ENCODE measurements at regions of chr3 and their contacts with region 1.

Region 1: GRCh38 chr3:138417559-138417982 is 16.8 kb upstream of the ESYT3 start:
- DNase-seq: peak; percentile 86 to 87
- H3K4me3 ChIP-seq: no peak overlapping the region
- H3K4me1 ChIP-seq: no peaks in the 10 kb centered on the region
- H3K27me3 ChIP-seq: no peaks in the 10 kb centered on the region

Region 2: DNA sequence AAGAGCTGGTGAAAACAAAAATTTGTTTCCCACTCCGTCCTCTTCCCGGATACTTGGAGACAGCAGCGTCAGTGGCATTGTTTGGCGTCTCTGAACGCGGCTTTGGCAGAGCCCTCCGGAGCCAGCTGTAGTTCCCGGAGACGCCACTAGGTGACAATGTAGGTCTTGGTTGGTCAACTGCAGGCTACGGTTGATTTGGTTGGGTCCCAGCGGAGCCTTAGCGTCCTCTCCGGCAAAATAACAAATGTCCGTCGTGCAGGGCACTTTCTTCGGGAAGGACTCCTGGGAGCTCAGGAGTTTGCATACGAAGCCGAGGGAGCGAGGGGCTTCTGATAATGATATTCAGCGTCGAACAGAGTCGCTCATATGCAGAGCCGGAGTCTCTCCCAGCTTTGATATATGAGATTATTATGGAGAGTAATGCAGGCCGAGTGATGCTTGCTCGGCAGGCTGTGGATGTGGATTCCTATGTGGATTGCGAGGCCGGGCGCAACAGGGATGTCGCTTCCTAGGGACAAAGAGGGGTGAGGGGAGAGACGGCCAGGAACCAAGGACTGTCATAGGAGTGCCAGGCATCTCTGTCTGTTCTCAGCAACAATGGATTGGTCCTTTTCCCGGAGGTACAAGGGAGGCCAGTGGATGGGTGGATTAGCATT is 1385.0 kb before region 1 on chr3:
- in situ Hi-C with region 1: no loop called
- DNase-seq: peak; percentile 61 to 97
- H3K4me3 ChIP-seq: no peak overlapping the region
- H3K4me1 ChIP-seq: peaks cover 3% of the 10 kb centered on the region; the same call in 1 of the 2 replicates
- H3K27me3 ChIP-seq: peaks cover 3% of the 10 kb centered on the region

Region 3: GRCh38 chr3:138157743-138158142 is 259.8 kb before region 1 on chr3:
- in situ Hi-C with region 1: no loop called
- DNase-seq: no peak
- H3K4me3 ChIP-seq: no peak overlapping the region
- H3K4me1 ChIP-seq: no peaks in the 10 kb centered on the region
- H3K27me3 ChIP-seq: no peaks in the 10 kb centered on the region

Region 4: DNA sequence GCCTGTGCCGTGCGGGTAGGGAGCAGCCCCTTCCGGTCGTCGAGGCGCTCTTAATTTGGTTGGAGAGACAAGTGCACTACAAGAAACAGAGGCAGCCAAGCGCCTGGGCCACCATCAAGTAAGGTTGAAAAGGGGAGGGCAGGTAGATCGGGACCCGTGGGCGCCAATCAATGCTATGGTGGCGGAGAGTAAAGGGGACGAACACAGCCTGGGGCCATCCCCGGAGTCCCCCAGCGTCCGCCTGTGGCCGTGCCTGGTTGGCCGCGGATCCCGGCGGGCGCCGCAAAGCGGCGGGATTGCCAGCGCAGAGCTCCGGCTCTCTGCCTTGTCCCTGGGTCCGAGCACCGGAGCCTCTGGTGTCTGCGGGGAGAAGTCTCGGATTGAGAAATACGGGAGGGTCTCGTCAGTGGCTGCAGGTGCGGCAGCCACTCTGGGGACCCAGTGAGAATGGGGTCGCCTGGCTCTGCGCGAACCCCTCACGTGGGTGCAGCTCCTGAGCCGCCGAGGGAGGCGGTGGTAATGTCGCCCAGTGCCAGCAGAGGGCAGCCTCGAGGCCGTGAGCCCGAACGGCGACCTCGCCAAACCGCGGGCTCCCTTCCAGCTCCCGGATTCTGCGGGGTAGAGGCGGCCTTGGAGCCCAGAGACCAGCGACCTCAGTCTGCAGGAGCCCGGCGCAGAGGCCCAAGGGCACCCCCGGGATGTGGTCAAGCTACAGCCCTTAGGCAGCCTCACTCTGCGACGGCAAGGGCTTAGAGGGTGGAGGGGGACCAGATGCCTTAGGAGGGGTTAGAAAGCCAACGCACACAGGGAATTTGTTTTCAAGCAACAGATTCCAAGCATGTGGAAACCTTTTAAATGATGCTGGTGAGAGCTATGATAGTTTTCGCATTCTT is 518.5 kb after region 1 on chr3:
- in situ Hi-C with region 1: loop called (anchors 10 kb)
- DNase-seq: peak; percentile 45 to 90
- H3K4me3 ChIP-seq: peak overlapping the region; percentile 39
- H3K4me1 ChIP-seq: peaks cover 6% of the 10 kb centered on the region
- H3K27me3 ChIP-seq: no peaks in the 10 kb centered on the region